ENCODE measurements at regions of chr1 and their contacts with region 1.

Region 1: GRCh38 chr1:203117611-203118575 is 9.6 kb upstream of the ADORA1 start:
- DNase-seq: peak; percentile 82
- ATAC-seq: peak; percentile 94 to 96

Region 2: GRCh38 chr1:202938287-202938925 is 179.5 kb before region 1 on chr1:
- intact Hi-C with region 1: no loop called
- DNase-seq: no peak
- ATAC-seq: no peak

Region 3: DNA sequence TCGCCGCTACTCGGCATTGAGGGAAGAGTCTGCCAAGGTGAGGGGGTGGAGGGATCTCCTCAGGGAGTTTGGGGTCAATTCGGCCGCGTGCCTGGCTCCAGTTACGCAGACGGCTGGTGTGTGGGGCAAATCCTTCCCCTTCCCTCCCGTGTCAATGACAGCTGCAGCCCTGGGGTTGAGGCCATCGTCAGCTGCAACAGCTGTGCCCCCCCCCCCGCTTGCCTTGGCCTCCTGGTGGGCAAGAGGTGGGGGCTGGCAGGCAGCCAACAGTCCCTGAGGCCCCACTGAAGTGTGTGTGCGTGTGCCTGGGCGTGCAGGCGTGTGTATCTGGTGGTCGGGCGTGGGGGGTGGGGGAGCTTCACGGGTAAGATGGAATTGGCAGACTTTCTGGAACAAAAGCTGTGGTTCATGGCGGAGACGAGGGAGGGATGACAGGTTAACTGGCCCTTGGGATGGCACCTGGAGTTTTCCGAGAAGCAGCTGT is 66.0 kb before region 1 on chr1:
- intact Hi-C with region 1: no loop called
- DNase-seq: no peak
- ATAC-seq: no peak

Region 4: GRCh38 chr1:203148125-203148524 is 30.2 kb after region 1 on chr1:
- intact Hi-C with region 1: no loop called
- DNase-seq: no peak
- ATAC-seq: no peak

Region 5: DNA sequence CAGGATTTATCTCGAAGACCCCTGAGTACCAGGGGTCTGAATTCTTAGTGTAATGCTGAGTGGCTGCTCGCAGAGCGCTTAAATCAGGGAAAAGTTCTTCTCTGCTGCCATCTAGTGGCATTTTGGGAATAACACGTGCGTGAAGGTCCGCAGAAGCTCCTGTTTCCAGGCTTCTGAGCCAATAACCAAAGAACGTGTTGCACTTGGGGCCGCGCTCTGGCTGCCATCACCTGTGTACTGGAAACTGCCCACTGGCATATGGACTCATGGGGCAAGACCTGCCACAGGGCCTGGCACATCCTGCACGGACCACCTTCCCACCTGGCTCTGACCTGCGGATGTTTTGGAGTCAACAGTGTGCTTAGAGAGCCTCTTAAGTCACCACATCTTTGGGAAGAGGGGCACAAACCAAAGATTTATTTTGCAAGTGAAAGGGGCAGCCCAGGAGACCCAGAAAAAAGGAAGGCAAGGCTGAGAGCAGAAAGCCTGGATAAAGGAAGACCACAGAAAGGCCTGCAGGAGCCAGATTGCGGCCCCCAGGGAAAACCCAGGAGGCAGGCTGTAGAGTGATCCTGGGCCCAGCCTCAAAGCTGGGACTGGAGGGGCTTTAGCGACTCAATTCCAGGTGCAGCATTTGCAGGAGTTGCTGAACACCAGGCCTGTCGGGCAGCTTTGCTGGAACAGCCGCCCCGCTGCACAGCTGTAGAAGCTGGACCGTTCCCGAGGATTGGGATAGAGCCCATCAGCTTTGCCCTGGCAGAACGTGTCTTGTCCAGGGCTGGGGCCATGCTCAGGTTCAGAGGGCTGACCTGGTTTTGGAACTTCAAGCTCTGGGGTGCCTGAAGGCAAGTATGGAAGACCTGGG is 98.6 kb after region 1 on chr1:
- intact Hi-C with region 1: loop called (anchors 2 to 5 kb)
- DNase-seq: peak; percentile 42
- ATAC-seq: peak; percentile 81 to 82

Measured in left cardiac atrium (tissue), 4 donors.